ENCODE measurements at regions of chr7 and their contacts with region 1.

Region 1: GRCh38 chr7:74401137-74401859 is 52.4 kb upstream of the GTF2IRD1 start:
- DNase-seq: peak; percentile 86
- H3K4me3 ChIP-seq: no peak overlapping the region
- H3K27ac ChIP-seq: no peak overlapping the region
- H3K4me1 ChIP-seq: no peaks in the 10 kb centered on the region
- H3K27me3 ChIP-seq: no peaks in the 10 kb centered on the region
- CTCF ChIP-seq: peak; percentile 88 to 97 (median 95)
- POLR2A ChIP-seq: no peak

Region 2: GRCh38 chr7:73865738-73866445 is 535.4 kb before region 1 on chr7:
- intact Hi-C with region 1: loop called (anchors 10 kb)
- DNase-seq: no peak
- H3K4me3 ChIP-seq: no peak overlapping the region
- H3K27ac ChIP-seq: no peak overlapping the region
- H3K4me1 ChIP-seq: peaks cover 0 to 15% (median 8%) of the 10 kb centered on the region in 6 donors
- H3K27me3 ChIP-seq: no peaks in the 10 kb centered on the region
- CTCF ChIP-seq: peak in 9 of 11 experiments; percentile 13 to 77 (median 62)
- POLR2A ChIP-seq: no peak

Region 3: DNA sequence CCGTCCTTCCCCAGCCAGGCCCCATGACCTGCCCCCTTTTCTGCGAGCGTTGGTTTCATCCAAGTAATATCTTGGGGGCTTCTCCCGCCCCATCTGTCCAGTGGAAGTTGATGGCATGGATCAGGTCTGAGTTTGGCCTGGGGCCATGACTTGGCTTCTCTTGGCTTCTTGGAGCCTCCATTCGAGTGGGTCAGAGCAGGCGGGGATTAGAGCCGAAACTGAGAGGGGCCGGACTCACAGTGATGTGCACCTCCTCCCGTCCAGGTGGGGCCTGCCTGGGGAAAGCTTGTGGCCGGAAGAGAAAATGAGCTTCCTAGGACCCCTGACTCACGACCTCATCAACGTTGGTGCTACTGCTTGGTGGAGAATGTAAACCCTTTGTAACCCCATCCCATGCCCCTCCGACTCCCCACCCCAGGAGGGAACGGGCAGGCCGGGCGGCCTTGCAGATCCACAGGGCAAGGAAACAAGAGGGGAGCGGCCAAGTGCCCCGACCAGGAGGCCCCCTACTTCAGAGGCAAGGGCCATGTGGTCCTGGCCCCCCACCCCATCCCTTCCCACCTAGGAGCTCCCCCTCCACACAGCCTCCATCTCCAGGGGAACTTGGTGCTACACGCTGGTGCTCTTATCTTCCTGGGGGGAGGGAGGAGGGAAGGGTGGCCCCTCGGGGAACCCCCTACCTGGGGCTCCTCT is 332.8 kb before region 1 on chr7:
- intact Hi-C with region 1: loop called (anchors 5 kb)
- DNase-seq: peak; percentile 66
- H3K4me3 ChIP-seq: no peak overlapping the region
- H3K27ac ChIP-seq: no peak overlapping the region
- H3K4me1 ChIP-seq: peaks cover 0 to 11% (median 6%) of the 10 kb centered on the region in 6 donors
- H3K27me3 ChIP-seq: no peaks in the 10 kb centered on the region
- CTCF ChIP-seq: no peak
- POLR2A ChIP-seq: no peak

Region 4: DNA sequence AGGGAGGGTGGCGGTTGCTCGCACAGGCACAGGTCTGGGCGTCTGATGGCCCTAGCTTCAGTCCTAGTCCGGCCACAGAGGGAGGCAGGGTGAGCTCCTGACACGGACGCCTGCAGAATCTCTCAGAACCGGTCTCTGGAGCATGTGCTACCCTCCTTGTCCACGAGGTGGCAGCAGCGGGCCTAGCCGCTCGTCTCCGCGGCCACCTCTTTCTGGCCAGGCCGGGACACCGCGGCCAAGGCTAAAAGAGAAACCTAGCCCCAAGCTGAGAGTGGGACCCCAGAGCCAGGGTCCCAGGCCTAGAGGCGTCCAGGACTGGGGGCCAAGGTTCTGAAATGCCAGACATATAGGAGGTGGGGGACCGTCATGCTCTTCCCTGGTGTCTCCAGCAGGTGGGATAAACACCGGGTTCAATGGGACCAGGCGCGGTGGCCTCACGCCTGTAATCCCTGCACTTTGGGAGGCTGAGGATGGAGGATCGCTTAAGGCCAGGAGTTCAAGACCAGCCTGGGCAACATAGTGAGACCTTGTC is 194.6 kb before region 1 on chr7:
- intact Hi-C with region 1: loop called (anchors 2 kb)
- DNase-seq: peak; percentile 96
- H3K4me3 ChIP-seq: peak overlapping the region in 6 of 8 donors; percentile 15 to 58 (median 23)
- H3K27ac ChIP-seq: peak overlapping the region in 2 of 8 donors; percentile 37 to 59
- H3K4me1 ChIP-seq: peaks cover 6 to 82% (median 48%) of the 10 kb centered on the region in 6 donors
- H3K27me3 ChIP-seq: no peaks in the 10 kb centered on the region
- CTCF ChIP-seq: peak; percentile 91 to 98 (median 96)
- POLR2A ChIP-seq: no peak

Region 5: DNA sequence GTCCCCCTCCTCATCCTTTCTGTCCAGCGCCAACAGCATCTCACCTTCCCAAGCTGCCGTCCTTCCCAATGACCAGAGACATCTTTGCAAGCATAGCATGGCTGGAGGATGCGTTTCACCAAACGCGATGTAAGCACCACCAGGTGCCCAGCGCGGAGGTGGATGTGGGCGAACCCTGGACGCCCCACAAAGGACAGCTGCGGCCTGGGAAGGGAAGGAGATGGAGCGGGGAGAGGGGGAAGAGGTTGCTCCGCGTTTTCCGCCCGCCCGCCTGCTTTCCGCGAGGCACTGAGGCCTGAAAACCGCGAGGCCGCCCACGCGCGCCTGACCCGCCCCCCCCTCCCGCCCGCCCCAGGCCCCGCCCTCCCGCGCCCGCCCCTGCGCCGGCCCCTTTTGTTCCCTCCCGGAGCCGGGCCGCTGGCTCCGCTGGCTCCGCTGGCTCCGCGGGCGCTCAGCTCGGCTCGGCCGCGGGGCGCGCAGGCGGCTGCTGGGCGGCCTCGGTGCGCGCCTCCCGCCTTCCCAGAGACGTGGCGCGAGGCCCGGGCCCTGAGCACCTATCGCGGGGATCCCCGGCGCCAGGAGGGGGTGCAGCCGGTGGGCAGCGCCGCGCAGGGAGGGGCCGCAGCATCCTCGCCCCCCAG is 112.2 kb before region 1 on chr7 and contains the start of gene CLIP2:
- intact Hi-C with region 1: loop called (anchors 10 kb)
- DNase-seq: peak; percentile 92
- H3K4me3 ChIP-seq: peak within 1 kb of the TSS; percentile 59 to 95 (median 74)
- H3K27ac ChIP-seq: peak within 1 kb of the TSS in 7 of 8 donors; percentile 72 to 87 (median 80)
- H3K4me1 ChIP-seq: peaks cover 18 to 74% (median 52%) of the 10 kb centered on the region in 6 donors
- H3K27me3 ChIP-seq: peaks cover 0 to 14% (median 0%) of the 10 kb centered on the region in 7 donors
- CTCF ChIP-seq: no peak
- POLR2A ChIP-seq: no peak
- total RNA-seq, gene CLIP2: 15.7 to 18.6 (median 17.4) TPM

Region 6: GRCh38 chr7:74343281-74344127 is 57.8 kb before region 1 on chr7:
- intact Hi-C with region 1: no loop called
- DNase-seq: no peak
- H3K4me3 ChIP-seq: no peak overlapping the region
- H3K27ac ChIP-seq: no peak overlapping the region
- H3K4me1 ChIP-seq: no peaks in the 10 kb centered on the region
- H3K27me3 ChIP-seq: no peaks in the 10 kb centered on the region
- CTCF ChIP-seq: no peak
- POLR2A ChIP-seq: no peak

Region 7: GRCh38 chr7:74467876-74468275 is 66.6 kb after region 1 on chr7:
- intact Hi-C with region 1: no loop called
- DNase-seq: no peak
- H3K4me3 ChIP-seq: no peak overlapping the region
- H3K27ac ChIP-seq: no peak overlapping the region
- H3K4me1 ChIP-seq: no peaks in the 10 kb centered on the region
- H3K27me3 ChIP-seq: no peaks in the 10 kb centered on the region
- CTCF ChIP-seq: no peak
- POLR2A ChIP-seq: no peak

Region 8: GRCh38 chr7:74479961-74480829 is 78.9 kb after region 1 on chr7:
- intact Hi-C with region 1: no loop called
- DNase-seq: peak; percentile 86
- H3K4me3 ChIP-seq: peak overlapping the region; percentile 6 to 63 (median 32)
- H3K27ac ChIP-seq: peak overlapping the region; percentile 64 to 89 (median 84)
- H3K4me1 ChIP-seq: peaks cover 5 to 63% (median 40%) of the 10 kb centered on the region in 6 donors
- H3K27me3 ChIP-seq: peaks cover 0 to 22% (median 9%) of the 10 kb centered on the region in 7 donors
- CTCF ChIP-seq: no peak
- POLR2A ChIP-seq: no peak

Region 9: DNA sequence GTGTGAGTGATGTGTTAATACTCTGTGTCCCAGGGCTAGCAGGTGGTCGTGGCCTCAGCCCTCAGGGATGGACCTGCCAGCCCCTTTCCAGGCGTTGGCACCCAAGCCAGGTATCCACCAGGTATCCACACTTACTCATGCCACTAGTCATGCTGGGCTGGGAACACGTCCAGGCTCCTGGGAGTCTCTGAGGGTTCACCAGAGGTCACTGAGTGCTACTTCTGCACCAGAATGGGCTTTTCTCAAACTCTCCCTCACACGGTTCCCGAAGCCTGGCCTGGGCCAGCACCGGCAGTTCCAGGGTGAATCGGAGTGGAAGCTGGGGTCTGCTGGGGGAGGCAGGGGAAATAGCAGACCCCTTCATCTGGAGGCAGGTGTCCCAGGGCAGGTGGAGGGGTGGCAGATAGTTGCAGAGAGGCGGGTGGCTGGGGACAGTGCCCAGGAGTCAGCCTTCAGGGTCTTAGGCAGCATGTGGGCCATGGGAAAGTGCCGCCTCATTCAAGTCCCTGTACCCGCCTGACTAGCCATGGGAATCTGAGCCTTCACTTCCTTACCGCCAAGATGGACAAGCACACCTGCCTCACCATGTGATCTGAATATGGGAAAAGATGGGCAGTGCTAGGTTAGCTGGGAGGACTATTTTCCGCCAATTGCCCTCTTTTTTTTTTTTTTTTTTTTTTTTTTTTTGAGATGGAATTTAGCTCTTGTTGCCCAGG is 160.8 kb after region 1 on chr7:
- intact Hi-C with region 1: no loop called
- DNase-seq: no peak
- H3K4me3 ChIP-seq: no peak overlapping the region
- H3K27ac ChIP-seq: no peak overlapping the region
- H3K4me1 ChIP-seq: no peaks in the 10 kb centered on the region
- H3K27me3 ChIP-seq: no peaks in the 10 kb centered on the region
- CTCF ChIP-seq: no peak
- POLR2A ChIP-seq: no peak